AG04449 (cell line): ENCODE measurements at regions of chr1 and their contacts with region 1.

Region 1: DNA sequence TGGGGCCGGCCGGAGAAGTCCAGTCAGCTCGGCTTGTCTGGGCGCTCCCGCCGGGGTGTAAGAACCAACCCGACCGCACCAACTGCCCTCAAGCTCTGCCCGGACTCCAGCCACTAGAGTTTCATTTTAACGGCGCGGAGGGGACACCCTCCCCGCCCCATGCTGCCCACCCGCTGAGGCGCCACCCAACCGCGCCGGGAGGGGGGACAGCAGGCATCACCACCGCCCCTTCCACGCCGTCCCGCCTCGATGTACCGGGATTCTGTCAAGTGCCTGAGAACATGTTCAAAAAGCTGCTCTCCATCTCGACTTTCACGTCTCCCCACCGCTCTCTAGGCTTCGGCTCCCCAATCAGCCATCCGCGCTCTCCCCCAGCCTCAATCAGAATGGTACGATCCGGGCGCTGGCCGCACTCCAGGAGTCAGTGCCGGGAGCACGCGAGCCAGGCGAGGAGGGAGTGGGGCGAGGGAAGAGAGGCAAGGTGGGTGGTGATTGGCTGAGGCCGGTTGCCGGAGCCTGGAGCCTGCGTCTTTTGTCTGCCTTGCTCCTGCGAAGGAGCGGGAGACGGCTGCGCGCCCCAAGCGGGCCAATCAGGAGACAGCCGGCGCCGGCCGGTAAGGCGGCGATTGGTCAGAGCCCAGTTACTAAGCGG is at the start of gene PIK3R3:
- DNase-seq: peak; percentile 93
- H3K4me3 ChIP-seq: peak within 1 kb of the TSS; percentile 83
- CTCF ChIP-seq: no peak

Region 2: GRCh38 chr1:46001081-46001785 is 131.4 kb before region 1 on chr1:
- CTCF ChIA-PET with region 1: no interaction called
- POLR2A ChIA-PET with region 1: no interaction called
- DNase-seq: no peak
- H3K4me3 ChIP-seq: no peak overlapping the region
- CTCF ChIP-seq: no peak

Region 3: GRCh38 chr1:46152016-46152415 is 19.4 kb after region 1 on chr1:
- CTCF ChIA-PET with region 1: no interaction called
- POLR2A ChIA-PET with region 1: interaction called, 15 read pairs
- DNase-seq: peak; percentile 65
- H3K4me3 ChIP-seq: no peak overlapping the region
- CTCF ChIP-seq: no peak